HCT116 (cell line): ENCODE measurements at regions of chr10 and their contacts with region 1.

Region 1: DNA sequence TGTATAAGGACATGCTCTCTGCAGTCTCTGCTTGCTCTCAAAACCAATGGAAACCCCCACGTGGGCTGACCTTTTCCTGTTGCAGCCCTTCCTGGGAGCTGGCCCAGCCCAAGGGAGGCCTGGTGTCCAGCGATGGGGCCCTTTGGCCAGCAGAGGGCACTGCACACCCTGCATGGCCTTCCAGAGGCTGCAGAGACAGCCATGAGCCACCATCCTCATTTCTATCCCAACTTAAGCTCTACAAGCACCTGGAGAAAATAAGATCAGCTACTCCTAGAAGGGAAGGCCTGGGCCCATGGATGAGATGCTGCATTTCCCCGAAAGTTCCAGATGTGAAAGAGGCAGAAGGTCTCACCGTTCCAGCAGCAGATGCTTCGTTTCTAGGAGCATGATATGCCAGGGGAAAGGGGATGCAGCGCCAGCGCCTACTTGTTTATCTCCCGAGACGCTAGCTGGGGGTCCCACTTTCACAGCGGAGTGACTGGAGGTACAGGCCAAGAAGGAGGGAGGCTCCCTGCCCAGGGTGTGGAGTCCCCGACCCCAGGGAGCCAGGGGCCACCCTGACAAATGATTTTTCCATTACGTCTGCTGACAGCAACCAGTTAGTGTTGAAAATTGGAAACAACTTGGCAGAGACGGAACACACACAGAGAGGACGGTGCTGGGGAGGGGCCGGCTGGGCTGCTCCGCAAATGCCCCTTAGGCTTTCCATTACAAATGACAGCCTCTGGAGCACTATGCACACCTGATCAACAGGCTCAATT is 106.4 kb downstream of the ZRANB1 start:
- DNase-seq: peak; percentile 88
- ATAC-seq: peak; percentile 87
- H3K4me3 ChIP-seq: no peak overlapping the region
- H3K27ac ChIP-seq: 0 out of 2 replicates have a peak overlapping the region, but pooled peaks have one; percentile 10
- H3K4me1 ChIP-seq: peaks cover 40 to 48% of the 10 kb centered on the region in 2 experiments
- H3K27me3 ChIP-seq: no peaks in the 10 kb centered on the region
- CTCF ChIP-seq: peak in 2 of 3 experiments; percentile 100; a peak in 4 of 6 replicates
- POLR2A ChIP-seq: no peak
- RAD21 ChIP-seq: no peak

Region 2: DNA sequence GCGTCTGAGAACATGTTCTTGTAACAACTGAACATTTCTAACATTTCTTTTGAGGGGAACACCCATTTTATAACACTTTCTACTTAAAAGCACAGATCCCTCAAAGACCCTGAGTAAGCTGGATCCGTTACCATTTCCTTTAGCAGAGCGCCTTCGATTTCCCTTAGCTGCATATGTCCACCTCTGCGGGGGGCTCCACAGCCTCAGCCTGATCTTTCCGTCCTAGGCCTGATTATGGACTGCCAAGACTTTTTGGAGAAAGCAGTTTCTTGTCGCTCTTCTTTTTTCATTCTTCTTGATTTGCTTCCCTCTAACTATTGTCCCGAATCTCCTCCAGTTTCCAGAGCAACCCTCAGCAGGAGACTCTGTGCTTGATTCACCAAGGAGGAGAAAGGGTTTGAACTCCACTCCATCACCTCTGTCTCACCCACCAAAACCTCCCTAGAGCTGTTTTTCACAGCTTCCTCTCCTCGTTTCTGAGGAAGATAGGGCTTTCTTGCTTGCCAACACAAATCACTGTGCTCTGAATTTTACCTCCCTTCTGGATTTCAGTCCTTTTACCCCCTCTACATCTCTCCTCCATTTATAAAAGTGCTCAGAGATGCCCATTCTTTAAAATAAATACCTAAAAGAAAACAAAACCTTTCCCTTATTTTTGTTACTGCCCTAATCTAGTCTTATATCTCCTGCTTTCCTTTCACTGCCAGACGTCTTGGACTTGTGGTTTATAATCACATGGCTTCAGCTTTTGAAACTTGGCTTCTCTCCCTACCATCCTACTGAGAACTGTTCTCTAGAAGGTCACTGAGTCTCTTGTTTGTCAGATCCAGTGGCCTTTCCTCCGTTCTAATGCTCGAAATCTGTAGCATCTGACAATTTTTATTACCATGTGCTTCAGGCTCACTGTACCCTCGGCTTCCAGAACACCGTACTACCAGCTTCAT is 136.9 kb before region 1 on chr10:
- CTCF ChIA-PET with region 1: no interaction called
- POLR2A ChIA-PET with region 1: no interaction called
- RAD21 ChIA-PET with region 1: no interaction called
- intact Hi-C with region 1: no loop called
- DNase-seq: no peak
- ATAC-seq: no peak
- H3K4me3 ChIP-seq: no peak overlapping the region
- H3K27ac ChIP-seq: no peak overlapping the region
- H3K4me1 ChIP-seq: peaks cover 2 to 8% of the 10 kb centered on the region in 2 experiments; a peak in 3 of 4 replicates
- H3K27me3 ChIP-seq: peaks cover 16% of the 10 kb centered on the region; the same call in 1 of the 2 replicates
- CTCF ChIP-seq: no peak
- POLR2A ChIP-seq: no peak
- RAD21 ChIP-seq: no peak

Region 3: GRCh38 chr10:124992462-124993344 is 55.6 kb before region 1 on chr10:
- CTCF ChIA-PET with region 1: interaction called, 17 read pairs
- POLR2A ChIA-PET with region 1: no interaction called
- RAD21 ChIA-PET with region 1: interaction called, 3 to 6 read pairs
- intact Hi-C with region 1: no loop called
- DNase-seq: peak; percentile 43
- ATAC-seq: peak; percentile 86
- H3K4me3 ChIP-seq: no peak overlapping the region
- H3K27ac ChIP-seq: no peak overlapping the region
- H3K4me1 ChIP-seq: no peaks in the 10 kb centered on the region
- H3K27me3 ChIP-seq: no peaks in the 10 kb centered on the region
- CTCF ChIP-seq: peak; percentile 49 to 68 (median 66); a peak in 5 of 6 replicates
- POLR2A ChIP-seq: no peak
- RAD21 ChIP-seq: peak; percentile 78

Region 4: DNA sequence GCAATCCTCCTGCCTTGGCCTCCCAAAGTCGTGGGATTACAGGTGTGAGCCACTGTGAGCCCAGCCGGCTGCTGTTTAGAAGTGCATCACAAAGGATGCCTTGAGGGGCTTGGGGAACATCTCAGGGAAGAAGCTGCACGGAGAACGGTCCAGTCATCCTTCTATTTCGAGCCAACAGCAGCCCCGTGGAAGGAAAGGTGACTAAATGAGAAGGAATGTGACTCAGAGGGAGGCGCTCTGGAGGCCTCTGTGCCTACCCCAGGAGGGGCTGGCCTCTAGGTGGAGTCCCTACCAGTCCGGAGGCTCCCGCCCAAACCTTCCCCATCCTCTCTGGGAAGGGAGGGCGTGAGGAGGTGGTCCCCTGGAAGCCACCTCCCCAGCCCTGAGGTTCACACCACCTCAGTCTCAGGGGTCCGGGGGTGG is 35.9 kb after region 1 on chr10:
- CTCF ChIA-PET with region 1: interaction called, 14 read pairs
- POLR2A ChIA-PET with region 1: no interaction called
- RAD21 ChIA-PET with region 1: interaction called in 1 of 2 experiments, 4 read pairs
- intact Hi-C with region 1: no loop called
- DNase-seq: peak; percentile 85
- ATAC-seq: peak; percentile 94
- H3K4me3 ChIP-seq: peak overlapping the region in 1 of 2 experiments; percentile 27; a peak in 2 of 4 replicates
- H3K27ac ChIP-seq: peak overlapping the region; percentile 62
- H3K4me1 ChIP-seq: peaks cover 49 to 73% of the 10 kb centered on the region in 2 experiments
- H3K27me3 ChIP-seq: no peaks in the 10 kb centered on the region
- CTCF ChIP-seq: peak in 2 of 3 experiments; percentile 49 to 60; a peak in 4 of 6 replicates
- POLR2A ChIP-seq: no peak
- RAD21 ChIP-seq: no peak

Region 5: GRCh38 chr10:125160856-125161706 is 112.8 kb after region 1 on chr10:
- CTCF ChIA-PET with region 1: no interaction called
- POLR2A ChIA-PET with region 1: no interaction called
- RAD21 ChIA-PET with region 1: no interaction called
- intact Hi-C with region 1: loop called (anchors 1 kb)
- DNase-seq: peak; percentile 82
- ATAC-seq: peak; percentile 79
- H3K4me3 ChIP-seq: peak overlapping the region; percentile 64 to 77
- H3K27ac ChIP-seq: peak overlapping the region; percentile 99
- H3K4me1 ChIP-seq: peaks cover 29 to 42% of the 10 kb centered on the region in 2 experiments
- H3K27me3 ChIP-seq: no peaks in the 10 kb centered on the region
- CTCF ChIP-seq: peak in 2 of 3 experiments; percentile 44 to 47; a peak in 4 of 6 replicates
- POLR2A ChIP-seq: peak; percentile 36
- RAD21 ChIP-seq: no peak

Region 6: DNA sequence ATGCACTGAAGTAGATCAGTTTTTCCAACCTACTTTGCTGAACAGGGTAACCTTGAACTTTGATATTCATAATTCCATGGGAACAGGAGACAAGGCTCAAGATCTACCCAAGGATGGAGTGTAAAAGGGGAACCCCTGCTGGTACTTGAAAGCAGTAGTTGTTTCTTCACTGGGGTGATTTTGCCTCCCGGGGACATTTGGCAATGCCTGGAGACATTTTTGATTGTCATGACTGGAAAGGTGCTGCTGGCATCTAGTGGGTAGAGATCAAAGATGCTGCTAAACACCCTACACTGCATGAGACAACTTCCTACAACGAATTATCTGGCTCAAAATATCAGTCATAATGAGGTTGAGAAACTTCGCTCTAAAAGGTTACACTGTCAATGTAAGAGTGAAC is 326.9 kb after region 1 on chr10:
- CTCF ChIA-PET with region 1: no interaction called
- POLR2A ChIA-PET with region 1: no interaction called
- RAD21 ChIA-PET with region 1: no interaction called
- intact Hi-C with region 1: loop called (anchors 1 kb)
- DNase-seq: peak; percentile 29
- ATAC-seq: peak; percentile 46
- H3K4me3 ChIP-seq: no peak overlapping the region
- H3K27ac ChIP-seq: no peak overlapping the region
- H3K4me1 ChIP-seq: no peaks in the 10 kb centered on the region
- H3K27me3 ChIP-seq: no peaks in the 10 kb centered on the region
- CTCF ChIP-seq: peak; percentile 15 to 81 (median 34); a peak in 5 of 6 replicates
- POLR2A ChIP-seq: no peak
- RAD21 ChIP-seq: peak; percentile 81

Region 7: GRCh38 chr10:125799451-125800182 is 751.3 kb after region 1 on chr10:
- CTCF ChIA-PET with region 1: no interaction called
- POLR2A ChIA-PET with region 1: no interaction called
- RAD21 ChIA-PET with region 1: no interaction called
- intact Hi-C with region 1: no loop called
- DNase-seq: no peak
- ATAC-seq: no peak
- H3K4me3 ChIP-seq: no peak overlapping the region
- H3K27ac ChIP-seq: no peak overlapping the region
- H3K4me1 ChIP-seq: no peaks in the 10 kb centered on the region
- H3K27me3 ChIP-seq: no peaks in the 10 kb centered on the region
- CTCF ChIP-seq: no peak
- POLR2A ChIP-seq: no peak
- RAD21 ChIP-seq: no peak